ENCODE measurements at regions of chr3 and their contacts with region 1.

Region 1: DNA sequence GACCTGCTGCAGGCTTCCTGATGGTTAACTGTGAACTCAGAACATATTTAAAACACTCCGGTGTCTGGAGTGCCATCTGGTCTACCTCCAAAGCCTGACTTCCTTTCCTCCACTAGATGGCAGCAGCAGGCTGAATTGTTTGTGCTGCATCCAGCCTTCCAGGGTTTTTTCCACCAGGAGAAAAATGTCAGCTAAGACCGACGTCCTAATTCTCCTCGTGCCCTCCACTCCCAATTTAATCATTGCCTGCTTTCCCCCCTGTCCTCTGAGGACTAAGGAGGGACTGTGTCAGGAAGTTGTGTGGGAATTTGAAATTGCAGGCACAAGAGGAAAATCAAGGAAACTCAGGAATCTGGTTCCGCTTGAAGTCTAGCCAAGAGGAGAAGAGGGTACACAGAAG is 165.2 kb upstream of the UMPS start:
- DNase-seq: peak; percentile 21 to 49 (median 48)
- H3K4me3 ChIP-seq: no peak overlapping the region
- H3K4me3 Mint-ChIP-seq: no peak overlapping the region
- H3K27ac ChIP-seq: no peak overlapping the region
- H3K27ac Mint-ChIP-seq: no peak overlapping the region
- H3K4me1 ChIP-seq: no peaks in the 10 kb centered on the region
- H3K4me1 Mint-ChIP-seq: no peaks in the 10 kb centered on the region
- H3K27me3 ChIP-seq: no peaks in the 10 kb centered on the region
- H3K27me3 Mint-ChIP-seq: peaks cover 1 to 7% (median 2%) of the 10 kb centered on the region in 3 donors
- CTCF ChIP-seq: peak; percentile 94

Region 2: DNA sequence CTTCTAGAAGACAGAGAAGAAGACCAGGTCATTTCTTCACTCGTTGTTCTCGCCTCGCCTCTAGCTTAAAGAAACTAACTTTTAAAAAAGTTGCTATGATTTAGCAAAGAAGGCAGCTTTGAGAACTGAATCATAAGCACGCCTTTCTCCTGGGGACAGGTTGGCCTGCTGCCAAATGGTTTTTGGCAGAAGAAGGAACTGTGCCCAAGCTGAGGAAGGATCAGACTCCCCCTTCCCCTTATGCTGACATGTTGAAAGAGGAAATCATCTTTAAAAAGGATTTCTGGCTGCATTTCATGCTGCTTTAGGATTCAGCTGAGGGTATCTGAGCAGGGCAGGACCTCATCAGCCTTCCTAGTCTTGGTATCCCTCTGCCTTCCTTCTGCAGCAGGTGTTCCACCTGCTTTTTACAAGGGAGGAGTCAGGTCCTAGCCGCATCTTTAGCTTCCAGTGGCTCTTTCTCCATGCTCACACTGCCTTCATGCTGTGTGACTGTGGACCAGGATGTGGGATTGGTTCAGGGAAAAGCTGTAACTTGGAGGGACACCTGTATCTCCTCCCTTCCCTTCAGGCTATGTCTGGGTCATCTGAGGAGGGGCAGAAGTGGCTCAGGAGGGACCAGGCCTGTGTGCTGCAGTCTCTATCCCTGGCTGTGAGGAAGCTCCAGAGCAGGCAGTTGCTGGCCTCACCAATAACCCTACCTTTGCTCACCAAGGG is 946.1 kb before region 1 on chr3:
- intact Hi-C with region 1: no loop called
- DNase-seq: peak; percentile 92 to 94 (median 94)
- H3K4me3 ChIP-seq: peak overlapping the region; percentile 8 to 67 (median 36)
- H3K4me3 Mint-ChIP-seq: peak overlapping the region; percentile 53 to 87
- H3K27ac ChIP-seq: peak overlapping the region; percentile 72 to 84
- H3K27ac Mint-ChIP-seq: peak overlapping the region; percentile 85 to 93 (median 92)
- H3K4me1 ChIP-seq: peaks cover 39 to 50% of the 10 kb centered on the region in 2 donors
- H3K4me1 Mint-ChIP-seq: peaks cover 48% of the 10 kb centered on the region
- H3K27me3 ChIP-seq: no peaks in the 10 kb centered on the region
- H3K27me3 Mint-ChIP-seq: no peaks in the 10 kb centered on the region
- CTCF ChIP-seq: no peak

Region 3: DNA sequence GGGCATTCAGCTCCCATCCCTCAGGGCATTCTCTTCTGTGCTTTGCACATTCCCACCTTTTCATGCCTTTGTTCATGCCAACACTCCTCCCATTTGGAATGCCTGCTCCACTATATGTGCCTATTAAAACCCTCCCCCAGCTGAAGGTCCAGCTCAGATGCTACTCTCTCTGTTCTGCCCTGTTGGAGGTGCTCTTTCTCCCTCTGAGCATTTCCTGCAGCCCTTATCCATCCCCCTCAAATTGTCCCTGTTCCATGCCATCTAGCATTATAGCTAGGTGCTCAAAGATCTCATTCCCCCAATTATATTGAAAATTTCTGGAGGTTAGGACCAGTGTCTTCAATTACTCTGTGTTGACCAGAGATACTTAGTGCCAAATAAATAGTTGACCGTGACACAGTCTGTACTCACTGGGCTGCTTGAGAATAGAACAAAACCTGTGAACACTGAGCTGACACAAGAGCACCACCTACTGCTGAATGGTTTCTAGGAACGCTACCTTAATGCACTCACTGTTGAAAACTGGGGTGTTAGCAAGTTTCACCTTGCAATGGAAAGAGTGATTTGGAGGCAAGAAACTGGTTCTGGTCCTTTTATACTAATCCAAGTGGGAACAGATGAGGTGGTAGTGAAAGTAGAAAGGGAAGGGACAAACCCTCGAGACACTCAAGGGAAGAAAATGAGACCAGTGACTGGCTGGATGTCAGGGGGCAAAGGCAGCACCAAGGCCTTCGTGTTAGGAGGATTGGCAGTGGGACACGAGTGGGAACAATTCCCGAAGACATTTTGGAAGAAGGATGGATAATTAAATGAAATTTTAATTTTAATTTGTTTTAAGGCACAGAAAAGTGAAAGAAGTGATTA is 283.3 kb before region 1 on chr3:
- intact Hi-C with region 1: no loop called
- DNase-seq: no peak
- H3K4me3 ChIP-seq: no peak overlapping the region
- H3K4me3 Mint-ChIP-seq: no peak overlapping the region
- H3K27ac ChIP-seq: no peak overlapping the region
- H3K27ac Mint-ChIP-seq: peak overlapping the region in 1 of 7 donors; percentile 68
- H3K4me1 ChIP-seq: no peaks in the 10 kb centered on the region
- H3K4me1 Mint-ChIP-seq: no peaks in the 10 kb centered on the region
- H3K27me3 ChIP-seq: no peaks in the 10 kb centered on the region
- H3K27me3 Mint-ChIP-seq: peaks cover 8 to 14% (median 11%) of the 10 kb centered on the region in 3 donors
- CTCF ChIP-seq: no peak

Region 4: GRCh38 chr3:124599779-124600609 is 35.0 kb after region 1 on chr3:
- intact Hi-C with region 1: no loop called
- DNase-seq: no peak
- H3K4me3 ChIP-seq: no peak overlapping the region
- H3K4me3 Mint-ChIP-seq: no peak overlapping the region
- H3K27ac ChIP-seq: no peak overlapping the region
- H3K27ac Mint-ChIP-seq: no peak overlapping the region
- H3K4me1 ChIP-seq: no peaks in the 10 kb centered on the region
- H3K4me1 Mint-ChIP-seq: no peaks in the 10 kb centered on the region
- H3K27me3 ChIP-seq: peaks cover 2% of the 10 kb centered on the region in 2 donors
- H3K27me3 Mint-ChIP-seq: peaks cover 1 to 3% (median 3%) of the 10 kb centered on the region in 3 donors
- CTCF ChIP-seq: no peak

Region 5: DNA sequence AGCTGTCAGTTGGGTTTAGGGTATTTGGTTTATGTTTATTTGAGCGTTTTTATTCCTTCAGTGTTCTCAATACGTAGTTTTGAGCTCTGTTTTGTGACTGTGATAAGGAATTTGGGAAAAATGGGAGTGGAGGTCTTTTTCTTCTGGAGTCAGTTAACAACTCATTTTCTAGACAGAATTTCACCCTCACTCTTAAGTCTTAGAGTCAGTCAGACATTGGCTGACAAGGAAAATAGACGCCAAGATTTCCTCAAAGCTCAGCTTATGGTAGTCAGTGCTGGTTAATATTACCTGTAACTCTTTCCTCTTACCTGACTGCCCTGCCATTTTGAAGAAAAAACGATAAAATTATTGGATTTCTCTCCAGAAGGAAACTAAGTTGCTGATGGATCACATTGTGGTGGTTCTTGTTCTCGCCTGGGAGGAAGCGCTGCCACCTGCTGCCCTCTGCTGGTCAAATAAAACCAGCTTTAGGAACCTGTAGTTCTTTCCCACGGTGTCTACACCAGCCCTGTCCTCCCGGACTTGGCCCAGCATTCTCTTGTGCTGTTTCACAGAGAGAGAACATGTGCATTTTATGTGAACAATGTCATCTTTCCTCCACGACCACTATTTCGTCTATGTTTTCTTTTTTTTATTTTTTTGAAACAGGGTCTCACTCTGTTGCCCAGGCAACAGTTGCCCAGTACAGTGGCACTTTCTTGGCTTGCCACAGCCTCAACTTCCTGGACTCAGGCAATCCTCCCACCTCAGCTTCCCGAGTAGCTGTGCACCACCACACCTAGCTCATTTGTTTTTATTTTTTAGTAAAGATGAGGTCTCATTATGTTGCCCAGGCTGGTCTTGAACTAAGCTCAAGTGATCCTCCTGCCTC is 123.8 kb after region 1 on chr3:
- intact Hi-C with region 1: loop called (anchors 1 to 5 kb)
- DNase-seq: peak; percentile 49 to 60 (median 58)
- H3K4me3 ChIP-seq: no peak overlapping the region
- H3K4me3 Mint-ChIP-seq: peak overlapping the region in 1 of 2 donors; percentile 36
- H3K27ac ChIP-seq: no peak overlapping the region
- H3K27ac Mint-ChIP-seq: no peak overlapping the region
- H3K4me1 ChIP-seq: no peaks in the 10 kb centered on the region
- H3K4me1 Mint-ChIP-seq: peaks cover 4% of the 10 kb centered on the region
- H3K27me3 ChIP-seq: no peaks in the 10 kb centered on the region
- H3K27me3 Mint-ChIP-seq: peaks cover 1 to 6% (median 3%) of the 10 kb centered on the region in 3 donors
- CTCF ChIP-seq: peak; percentile 87

Measured in CD14-positive monocyte (primary cell).